Ovary (tissue), 10 donors: ENCODE measurements at regions of chr1 and their contacts with region 1.

Region 1: GRCh38 chr1:9573723-9574122 is 15.0 kb upstream of the TMEM201 start:
- DNase-seq: no peak
- H3K4me3 ChIP-seq: no peak overlapping the region
- H3K27ac ChIP-seq: no peak overlapping the region
- H3K4me1 ChIP-seq: peaks cover 2% of the 10 kb centered on the region
- H3K27me3 ChIP-seq: no peaks in the 10 kb centered on the region
- CTCF ChIP-seq: peak in 2 of 3 donors; percentile 29 to 44
- EP300 ChIP-seq: no peak
- POLR2A ChIP-seq: no peak

Region 2: GRCh38 chr1:9275567-9276034 is 298.1 kb before region 1 on chr1:
- intact Hi-C with region 1: loop called in 2 of 4 experiments (anchors 10 kb)
- DNase-seq: no peak
- H3K4me3 ChIP-seq: no peak overlapping the region
- H3K27ac ChIP-seq: no peak overlapping the region
- H3K4me1 ChIP-seq: peaks cover 3% of the 10 kb centered on the region
- H3K27me3 ChIP-seq: no peaks in the 10 kb centered on the region
- CTCF ChIP-seq: no peak
- EP300 ChIP-seq: no peak
- POLR2A ChIP-seq: no peak